ENCODE measurements at regions of chr4 and their contacts with region 1.

Region 1: DNA sequence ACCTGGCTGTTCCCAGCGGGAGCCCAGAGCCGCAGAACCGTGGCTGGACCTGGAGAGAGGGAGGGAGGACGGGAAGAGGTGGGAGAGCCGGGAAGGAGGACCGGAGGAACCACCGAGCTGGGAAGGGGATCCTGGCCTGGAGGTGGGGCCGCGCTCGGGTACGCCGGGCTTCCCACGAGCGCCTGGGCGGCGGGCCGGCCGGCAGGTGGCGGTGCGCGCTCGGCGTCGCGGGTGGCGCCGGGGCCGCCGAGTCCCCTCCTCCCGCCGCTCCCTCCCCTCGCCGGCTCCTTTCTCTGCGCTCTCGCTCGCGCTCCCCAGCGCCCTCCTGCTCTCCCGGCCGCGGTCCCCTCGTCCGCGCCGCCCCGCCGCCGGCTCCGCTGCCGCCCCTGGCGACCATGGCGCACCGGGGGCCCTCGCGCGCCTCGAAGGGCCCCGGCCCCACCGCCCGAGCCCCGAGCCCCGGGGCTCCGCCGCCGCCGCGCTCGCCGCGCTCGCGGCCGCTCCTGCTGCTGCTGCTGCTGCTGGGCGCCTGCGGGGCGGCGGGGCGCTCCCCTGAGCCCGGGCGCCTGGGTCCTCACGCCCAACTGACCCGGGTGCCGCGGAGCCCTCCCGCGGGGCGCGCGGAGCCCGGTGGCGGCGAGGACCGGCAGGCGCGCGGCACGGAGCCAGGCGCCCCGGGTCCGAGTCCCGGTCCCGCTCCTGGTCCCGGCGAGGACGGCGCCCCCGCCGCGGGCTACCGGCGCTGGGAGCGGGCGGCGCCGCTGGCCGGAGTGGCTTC is at the start of gene SORCS2:
- DNase-seq: peak; percentile 74
- ATAC-seq: peak; percentile 85
- H3K4me3 Mint-ChIP-seq: no peak within 1 kb of the TSS
- H3K27ac Mint-ChIP-seq: no peak within 1 kb of the TSS
- H3K4me1 Mint-ChIP-seq: no peaks in the 10 kb centered on the region
- H3K27me3 Mint-ChIP-seq: peaks cover 45% of the 10 kb centered on the region
- total RNA-seq, gene SORCS2: 0.04 TPM in 1 of 2 experiments, not detected in the other

Region 2: DNA sequence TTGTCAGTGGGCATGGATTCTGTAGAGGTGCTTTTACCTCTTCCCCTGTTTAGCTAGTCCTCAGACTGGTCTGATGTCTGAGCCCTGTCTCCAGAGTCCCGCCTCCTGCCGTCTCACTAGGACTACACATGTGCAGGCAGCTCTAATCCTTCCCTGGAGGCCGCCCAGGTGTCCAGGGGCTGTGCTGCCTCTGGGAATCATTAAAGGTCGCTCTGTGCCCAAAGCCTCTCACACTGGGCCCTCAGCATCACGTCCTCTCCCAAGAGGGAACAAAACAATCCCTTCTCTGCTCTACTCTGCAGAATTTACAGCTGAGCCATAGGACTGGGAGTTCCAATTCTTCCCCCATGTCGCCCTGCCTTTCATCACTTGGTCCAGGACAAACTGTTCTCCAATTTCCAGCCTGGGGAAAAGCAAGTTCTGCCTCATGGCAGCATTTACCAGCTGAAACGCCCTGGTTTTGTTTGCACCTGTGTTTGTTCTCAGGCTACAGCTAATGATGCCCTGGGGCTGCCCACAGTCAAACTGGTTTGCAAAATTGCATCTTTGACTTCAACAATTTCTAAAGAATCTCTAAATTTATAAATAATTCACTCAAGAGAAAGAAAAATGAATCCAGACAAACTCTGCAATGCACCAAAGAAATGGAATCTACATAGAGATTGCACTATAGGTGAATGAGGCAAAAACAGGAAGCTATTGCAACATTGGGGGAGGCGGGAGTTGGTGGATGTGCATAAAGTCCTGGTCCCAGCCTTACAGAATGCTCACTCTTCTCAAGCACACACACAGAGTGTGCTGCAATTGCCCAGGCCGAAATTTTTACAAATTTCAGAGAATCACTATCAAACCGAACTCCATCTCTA is 559.2 kb before region 1 on chr4:
- CTCF ChIA-PET with region 1: no interaction called
- POLR2A ChIA-PET with region 1: no interaction called
- intact Hi-C with region 1: no loop called
- DNase-seq: peak; percentile 36
- ATAC-seq: peak; percentile 65
- H3K4me3 Mint-ChIP-seq: no peak overlapping the region
- H3K27ac Mint-ChIP-seq: peak overlapping the region; percentile 19
- H3K4me1 Mint-ChIP-seq: peaks cover 3% of the 10 kb centered on the region
- H3K27me3 Mint-ChIP-seq: no peaks in the 10 kb centered on the region

Region 3: GRCh38 chr4:7295911-7296660 is 103.6 kb after region 1 on chr4:
- CTCF ChIA-PET with region 1: no interaction called
- POLR2A ChIA-PET with region 1: no interaction called
- intact Hi-C with region 1: loop called in 1 of 2 experiments (anchors 1 kb)
- DNase-seq: peak; percentile 31
- ATAC-seq: no peak
- H3K4me3 Mint-ChIP-seq: no peak overlapping the region
- H3K27ac Mint-ChIP-seq: no peak overlapping the region
- H3K4me1 Mint-ChIP-seq: no peaks in the 10 kb centered on the region
- H3K27me3 Mint-ChIP-seq: peaks cover 2% of the 10 kb centered on the region

Region 4: GRCh38 chr4:7335344-7336069 is 143.1 kb after region 1 on chr4:
- CTCF ChIA-PET with region 1: interaction called, 13 read pairs
- POLR2A ChIA-PET with region 1: no interaction called
- intact Hi-C with region 1: loop called (anchors 1 to 5 kb)
- DNase-seq: peak; percentile 82
- ATAC-seq: peak; percentile 91
- H3K4me3 Mint-ChIP-seq: no peak overlapping the region
- H3K27ac Mint-ChIP-seq: no peak overlapping the region
- H3K4me1 Mint-ChIP-seq: no peaks in the 10 kb centered on the region
- H3K27me3 Mint-ChIP-seq: no peaks in the 10 kb centered on the region

Region 5: DNA sequence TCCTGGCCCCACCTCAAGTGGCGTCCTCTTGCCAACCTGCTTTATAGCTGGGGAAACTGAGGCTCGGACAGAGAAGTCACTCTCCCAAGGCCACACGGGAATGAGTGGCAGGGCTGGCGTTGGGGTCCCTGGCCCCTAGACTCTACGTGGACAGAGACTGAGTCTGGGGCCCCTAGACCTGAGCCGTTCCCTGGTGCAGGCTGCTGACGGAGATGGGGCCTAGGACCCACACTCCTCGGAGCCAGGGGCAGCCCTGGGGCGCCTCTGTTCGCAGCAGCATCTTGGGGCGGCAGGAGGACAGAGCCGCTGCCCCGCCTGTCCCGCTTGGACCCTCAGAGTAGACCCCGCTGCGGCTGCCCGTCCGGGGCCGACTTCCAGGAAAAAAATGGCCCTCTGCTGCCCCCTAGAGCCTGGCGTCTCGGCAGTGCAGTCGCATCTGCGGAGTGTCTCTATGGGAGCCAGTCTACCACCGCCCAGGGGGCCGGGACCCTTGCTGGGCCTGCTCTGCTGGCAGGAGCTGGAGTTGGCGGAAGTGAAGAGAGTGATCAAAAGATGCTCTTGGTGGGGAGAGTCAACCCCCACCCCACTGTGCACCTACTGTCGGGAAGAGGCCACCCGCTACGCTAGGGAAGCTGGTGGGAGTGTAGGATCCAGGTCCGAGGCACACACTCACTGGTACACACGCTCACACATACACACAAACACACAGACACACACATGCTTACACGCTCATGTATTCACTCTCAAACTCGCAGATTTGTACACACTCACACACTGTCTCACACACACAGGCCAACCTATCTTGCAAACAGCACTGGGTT is 527.1 kb after region 1 on chr4:
- CTCF ChIA-PET with region 1: no interaction called
- POLR2A ChIA-PET with region 1: no interaction called
- intact Hi-C with region 1: loop called (anchors 1 to 5 kb)
- DNase-seq: peak; percentile 82
- ATAC-seq: peak; percentile 82
- H3K4me3 Mint-ChIP-seq: no peak overlapping the region
- H3K27ac Mint-ChIP-seq: no peak overlapping the region
- H3K4me1 Mint-ChIP-seq: no peaks in the 10 kb centered on the region
- H3K27me3 Mint-ChIP-seq: peaks cover 11% of the 10 kb centered on the region

Measured in activated CD4-positive, alpha-beta T cell treated with anti-CD3 and anti-CD28 coated beads for 36 hours (primary cell).